IMR-90 (cell line): ENCODE measurements at regions of chr3 and their contacts with region 1.

Region 1: GRCh38 chr3:39115870-39116269 is 8.4 kb downstream of the TTC21A start:
- DNase-seq: no peak
- ATAC-seq: no peak
- H3K4me3 ChIP-seq: no peak overlapping the region
- H3K27ac ChIP-seq: no peak overlapping the region
- H3K4me1 ChIP-seq: no peaks in the 10 kb centered on the region
- H3K27me3 ChIP-seq: no peaks in the 10 kb centered on the region
- CTCF ChIP-seq: no peak
- POLR2A ChIP-seq: no peak
- RAD21 ChIP-seq: no peak

Region 2: GRCh38 chr3:39065197-39065596 is 50.7 kb before region 1 on chr3:
- CTCF ChIA-PET with region 1: no interaction called
- POLR2A ChIA-PET with region 1: no interaction called
- dilution Hi-C with region 1: no loop called
- in situ Hi-C with region 1: no loop called
- intact Hi-C with region 1: no loop called
- DNase-seq: peak; percentile 60
- ATAC-seq: peak; percentile 97
- H3K4me3 ChIP-seq: no peak overlapping the region
- H3K27ac ChIP-seq: no peak overlapping the region
- H3K4me1 ChIP-seq: peaks cover 2% of the 10 kb centered on the region; the same call in 1 of the 2 replicates
- H3K27me3 ChIP-seq: no peaks in the 10 kb centered on the region
- CTCF ChIP-seq: peak; percentile 52
- POLR2A ChIP-seq: no peak
- RAD21 ChIP-seq: peak; percentile 33; the same call in 1 of the 2 replicates

Region 3: DNA sequence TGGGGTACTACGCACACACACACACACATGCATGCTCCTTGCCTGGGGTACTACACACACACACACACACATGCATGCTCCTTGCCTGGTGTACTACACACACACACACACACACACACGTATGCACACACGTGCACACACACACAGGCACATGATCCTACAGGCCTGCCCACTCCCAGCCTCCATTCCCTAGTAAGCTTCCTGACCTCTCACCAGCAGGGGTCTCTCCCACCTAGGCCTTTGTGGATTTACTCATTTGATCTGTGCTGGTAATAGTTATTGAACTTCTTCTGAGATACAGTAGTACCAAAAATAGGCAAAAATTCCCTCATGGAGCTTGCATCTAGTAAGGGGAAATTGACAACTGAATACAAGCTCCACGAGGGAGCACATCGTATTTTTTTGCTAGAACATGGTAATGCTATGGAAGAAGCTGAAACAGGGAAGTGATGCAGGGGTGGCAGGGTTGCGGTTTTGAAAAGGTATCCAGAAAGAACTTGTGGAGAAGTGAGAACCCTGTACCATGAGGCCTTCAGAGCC is 10.7 kb after region 1 on chr3:
- CTCF ChIA-PET with region 1: interaction called, 11 read pairs
- POLR2A ChIA-PET with region 1: interaction called, 3 read pairs
- dilution Hi-C with region 1: no loop called
- in situ Hi-C with region 1: no loop called
- intact Hi-C with region 1: no loop called
- DNase-seq: peak; percentile 65
- ATAC-seq: peak; percentile 78
- H3K4me3 ChIP-seq: no peak overlapping the region
- H3K27ac ChIP-seq: no peak overlapping the region
- H3K4me1 ChIP-seq: peaks cover 5% of the 10 kb centered on the region
- H3K27me3 ChIP-seq: no peaks in the 10 kb centered on the region
- CTCF ChIP-seq: peak; percentile 65
- POLR2A ChIP-seq: no peak
- RAD21 ChIP-seq: peak; percentile 70

Region 4: GRCh38 chr3:39189959-39190269 is 74.0 kb after region 1 on chr3:
- CTCF ChIA-PET with region 1: no interaction called
- POLR2A ChIA-PET with region 1: no interaction called
- dilution Hi-C with region 1: no loop called
- in situ Hi-C with region 1: no loop called
- intact Hi-C with region 1: no loop called
- DNase-seq: peak; percentile 64
- ATAC-seq: peak; percentile 74; the same call in 1 of the 2 replicates
- H3K4me3 ChIP-seq: no peak overlapping the region
- H3K27ac ChIP-seq: no peak overlapping the region
- H3K4me1 ChIP-seq: peaks cover 9% of the 10 kb centered on the region
- H3K27me3 ChIP-seq: no peaks in the 10 kb centered on the region
- CTCF ChIP-seq: peak; percentile 81
- POLR2A ChIP-seq: no peak
- RAD21 ChIP-seq: peak; percentile 76